ENCODE measurements at regions of chr1 and their contacts with region 1.

Region 1: DNA sequence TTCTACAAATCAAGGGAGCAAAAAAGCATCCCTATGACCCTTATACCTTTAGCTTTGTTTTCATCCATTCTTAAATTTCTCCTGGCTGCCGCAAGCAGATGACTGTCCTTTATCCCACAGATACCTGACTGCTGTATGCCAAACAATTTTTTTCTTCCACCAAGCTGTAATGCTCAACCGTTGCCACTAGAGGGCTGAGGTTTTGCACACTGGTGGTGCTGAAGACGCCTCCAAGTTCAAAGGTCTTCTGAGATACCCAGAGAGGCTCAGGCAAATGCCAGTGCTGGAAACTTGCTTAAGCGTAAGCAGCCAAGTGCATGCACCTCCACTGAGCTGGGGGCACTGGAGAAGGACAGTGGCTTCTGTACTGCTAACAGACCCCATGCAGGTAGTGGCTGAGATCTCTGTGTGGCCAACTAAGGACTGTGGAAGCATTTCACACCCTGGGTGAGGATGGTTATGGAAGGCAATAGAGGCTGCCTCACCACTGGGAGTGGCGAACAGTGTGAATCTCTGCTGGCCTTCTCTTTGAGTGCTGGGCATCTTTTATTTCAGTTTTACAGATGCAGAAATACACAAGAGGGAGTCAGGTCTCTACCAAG is 28.5 kb downstream of the CNIH3 start:
- DNase-seq: peak; percentile 18 to 75 (median 58)
- ATAC-seq: peak; percentile 79
- H3K4me3 ChIP-seq: no peak overlapping the region
- H3K4me3 Mint-ChIP-seq: no peak overlapping the region
- H3K27ac ChIP-seq: no peak overlapping the region
- H3K27ac Mint-ChIP-seq: no peak overlapping the region
- H3K4me1 ChIP-seq: no peaks in the 10 kb centered on the region
- H3K4me1 Mint-ChIP-seq: no peaks in the 10 kb centered on the region
- H3K27me3 ChIP-seq: no peaks in the 10 kb centered on the region
- H3K27me3 Mint-ChIP-seq: peaks cover 2% of the 10 kb centered on the region
- CTCF ChIP-seq: peak; percentile 96

Region 2: DNA sequence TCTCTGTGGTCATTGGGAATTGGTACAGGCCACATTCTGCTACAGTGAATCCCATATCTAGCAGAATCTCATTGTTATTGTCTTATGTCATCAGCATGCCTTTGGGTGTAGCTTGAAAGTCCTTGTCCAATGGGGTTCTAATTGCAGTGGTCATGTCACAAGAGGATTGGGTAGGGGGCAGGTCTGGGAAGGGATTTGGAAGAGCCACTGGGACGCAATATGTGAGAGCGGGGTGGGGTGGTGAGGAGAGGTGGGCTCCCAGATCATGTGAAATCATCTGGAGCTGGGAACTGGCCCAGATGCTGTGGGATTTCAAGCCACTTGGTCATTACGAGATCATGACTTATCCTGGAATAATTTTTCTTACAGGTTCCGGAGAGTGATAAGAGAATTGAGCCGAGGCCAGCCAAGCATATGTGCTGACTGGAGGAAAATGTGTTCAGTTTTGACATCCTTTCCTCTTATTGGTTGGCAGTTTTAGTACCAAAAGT is 12.2 kb before region 1 on chr1:
- CTCF ChIA-PET with region 1: interaction called, 31 read pairs
- POLR2A ChIA-PET with region 1: no interaction called
- intact Hi-C with region 1: no loop called
- DNase-seq: no peak
- ATAC-seq: no peak
- H3K4me3 ChIP-seq: no peak overlapping the region
- H3K4me3 Mint-ChIP-seq: no peak overlapping the region
- H3K27ac ChIP-seq: no peak overlapping the region
- H3K27ac Mint-ChIP-seq: no peak overlapping the region
- H3K4me1 ChIP-seq: no peaks in the 10 kb centered on the region
- H3K4me1 Mint-ChIP-seq: peaks cover 2% of the 10 kb centered on the region
- H3K27me3 ChIP-seq: peaks cover 0 to 2% of the 10 kb centered on the region in 2 experiments
- H3K27me3 Mint-ChIP-seq: peaks cover 10% of the 10 kb centered on the region
- CTCF ChIP-seq: no peak

Region 3: DNA sequence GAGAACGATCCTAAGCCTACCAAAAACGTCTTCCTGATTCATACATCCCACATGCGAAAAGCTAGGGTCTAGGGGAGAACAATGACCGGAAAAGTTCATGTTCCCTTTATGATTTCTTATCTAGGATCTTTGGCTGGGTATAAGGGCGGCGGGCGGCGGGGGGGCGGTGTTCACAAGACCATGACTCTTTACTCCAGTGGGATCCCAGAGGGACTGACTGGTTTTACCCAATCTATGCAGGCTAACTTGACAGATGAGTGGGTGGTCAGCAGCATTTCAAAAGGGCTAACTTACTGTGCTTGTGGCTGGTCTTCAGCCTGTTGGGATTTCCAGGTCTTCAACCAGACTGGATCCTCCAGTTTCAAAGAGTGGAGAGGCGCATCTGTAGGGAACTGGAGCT is 11.7 kb after region 1 on chr1:
- CTCF ChIA-PET with region 1: interaction called, 18 read pairs
- POLR2A ChIA-PET with region 1: no interaction called
- intact Hi-C with region 1: no loop called
- DNase-seq: no peak
- ATAC-seq: no peak
- H3K4me3 ChIP-seq: no peak overlapping the region
- H3K4me3 Mint-ChIP-seq: no peak overlapping the region
- H3K27ac ChIP-seq: no peak overlapping the region
- H3K27ac Mint-ChIP-seq: no peak overlapping the region
- H3K4me1 ChIP-seq: no peaks in the 10 kb centered on the region
- H3K4me1 Mint-ChIP-seq: no peaks in the 10 kb centered on the region
- H3K27me3 ChIP-seq: no peaks in the 10 kb centered on the region
- H3K27me3 Mint-ChIP-seq: peaks cover 5% of the 10 kb centered on the region
- CTCF ChIP-seq: no peak

Measured in CD8-positive, alpha-beta T cell (primary cell).